RWPE1 (cell line): ENCODE measurements at regions of chr12 and their contacts with region 1.

Region 1: GRCh38 chr12:8658346-8658745 is 4.3 kb downstream of the MFAP5 start:
- DNase-seq: peak; percentile 67
- H3K27ac ChIP-seq: peak overlapping the region; percentile 56; the same call in 1 of the 2 replicates
- CTCF ChIP-seq: no peak

Region 2: GRCh38 chr12:7155481-7156034 is 1502.8 kb before region 1 on chr12:
- CTCF ChIA-PET with region 1: no interaction called
- POLR2A ChIA-PET with region 1: no interaction called
- DNase-seq: peak; percentile 45
- H3K27ac ChIP-seq: peak overlapping the region; percentile 59
- CTCF ChIP-seq: no peak

Region 3: DNA sequence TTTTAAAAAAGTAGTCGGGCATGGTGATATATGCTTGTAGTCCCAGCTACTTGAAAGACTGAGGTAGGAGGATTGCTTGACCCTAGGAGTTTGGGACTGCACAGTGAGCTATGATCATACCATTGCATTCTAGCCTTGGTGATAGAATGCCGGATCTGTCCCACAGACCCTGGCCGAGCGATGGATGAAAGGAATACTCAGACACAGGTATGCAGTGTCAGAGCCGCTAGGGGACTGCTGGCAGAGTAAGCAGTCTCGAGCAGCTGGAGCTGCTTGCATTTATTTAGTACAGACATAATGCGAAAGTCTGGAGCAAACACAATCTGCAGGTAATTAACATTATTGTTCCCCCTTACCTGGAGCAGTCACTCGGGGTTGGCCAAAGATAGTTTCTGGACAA is 64.3 kb before region 1 on chr12:
- CTCF ChIA-PET with region 1: no interaction called
- POLR2A ChIA-PET with region 1: no interaction called
- DNase-seq: no peak
- H3K27ac ChIP-seq: no peak overlapping the region
- CTCF ChIP-seq: no peak

Region 4: DNA sequence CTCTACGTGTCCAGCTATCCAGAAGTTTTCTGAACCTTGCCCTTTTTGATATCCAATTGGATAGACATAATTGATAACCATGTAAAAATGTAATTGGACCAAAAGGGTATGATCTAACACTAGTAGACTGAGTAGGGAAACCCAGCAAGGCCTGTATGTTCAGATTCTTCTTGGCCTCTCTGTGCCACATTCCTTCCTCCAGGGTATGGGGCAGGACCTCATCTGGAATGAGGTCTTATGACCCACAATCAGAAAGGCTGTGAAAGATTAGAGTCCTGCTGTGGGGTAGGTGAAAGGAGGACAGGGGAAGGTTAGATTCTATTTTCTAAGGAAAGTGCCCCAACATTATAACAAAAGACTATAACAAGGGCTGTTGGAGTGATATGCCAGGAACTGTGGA is 112.7 kb after region 1 on chr12:
- CTCF ChIA-PET with region 1: no interaction called
- POLR2A ChIA-PET with region 1: no interaction called
- DNase-seq: no peak
- H3K27ac ChIP-seq: no peak overlapping the region
- CTCF ChIP-seq: no peak

Region 5: GRCh38 chr12:9049520-9050133 is 391.3 kb after region 1 on chr12:
- CTCF ChIA-PET with region 1: interaction called, 12 read pairs
- POLR2A ChIA-PET with region 1: no interaction called
- DNase-seq: peak; percentile 29
- H3K27ac ChIP-seq: no peak overlapping the region
- CTCF ChIP-seq: peak; percentile 37; the same call in 1 of the 2 replicates